PC-3 (cell line): ENCODE measurements at regions of chr13 and their contacts with region 1.

Region 1: GRCh38 chr13:32911506-32911905 is 104.7 kb upstream of the KL start:
- DNase-seq: peak; percentile 61
- ATAC-seq: peak; percentile 90
- H3K4me3 ChIP-seq: no peak overlapping the region
- H3K27ac ChIP-seq: peak overlapping the region; percentile 83
- H3K4me1 ChIP-seq: peaks cover 16% of the 10 kb centered on the region
- H3K27me3 ChIP-seq: no peaks in the 10 kb centered on the region
- CTCF ChIP-seq: peak; percentile 75

Region 2: GRCh38 chr13:31930901-31931522 is 980.5 kb before region 1 on chr13:
- CTCF ChIA-PET with region 1: no interaction called
- POLR2A ChIA-PET with region 1: no interaction called
- intact Hi-C with region 1: no loop called
- DNase-seq: peak; percentile 64
- ATAC-seq: no peak
- H3K4me3 ChIP-seq: no peak overlapping the region
- H3K27ac ChIP-seq: peak overlapping the region; percentile 11; the same call in 1 of the 2 replicates
- H3K4me1 ChIP-seq: peaks cover 23% of the 10 kb centered on the region
- H3K27me3 ChIP-seq: no peaks in the 10 kb centered on the region
- CTCF ChIP-seq: no peak

Region 3: DNA sequence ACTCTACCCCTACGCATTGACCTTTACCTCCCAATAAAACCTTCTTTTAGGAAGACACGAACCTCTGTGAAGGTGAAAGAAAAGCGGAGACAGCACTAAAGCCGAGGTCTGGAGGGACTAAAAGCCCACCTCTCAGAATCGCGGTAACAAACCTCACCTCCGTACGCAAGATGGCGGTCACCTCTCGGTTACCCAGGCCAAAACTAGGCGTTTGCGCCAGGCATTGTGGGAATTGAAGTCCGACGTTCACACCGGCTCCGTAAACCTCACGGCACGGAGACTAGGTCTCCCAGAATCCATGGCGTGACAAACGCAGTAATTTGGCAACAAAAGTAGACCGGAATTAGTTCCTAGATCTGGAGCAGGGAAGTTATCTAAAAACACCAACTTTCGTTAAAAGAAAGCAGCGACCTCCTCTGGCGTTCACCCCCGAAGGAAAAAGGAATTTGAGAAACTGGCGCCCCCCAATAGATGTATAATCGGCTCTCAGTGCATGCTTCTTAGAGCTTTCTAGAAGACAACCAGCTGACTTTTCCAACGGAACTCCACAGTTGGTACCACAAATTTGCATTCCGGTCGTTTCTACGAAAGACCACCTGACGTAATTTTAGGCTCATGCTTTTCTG is 372.8 kb before region 1 on chr13 and contains the start of gene N4BP2L2:
- CTCF ChIA-PET with region 1: no interaction called
- POLR2A ChIA-PET with region 1: no interaction called
- intact Hi-C with region 1: no loop called
- DNase-seq: peak; percentile 95
- ATAC-seq: peak; percentile 99
- H3K4me3 ChIP-seq: peak within 1 kb of the TSS; percentile 85
- H3K27ac ChIP-seq: peak within 1 kb of the TSS; percentile 65
- H3K4me1 ChIP-seq: peaks cover 20% of the 10 kb centered on the region; the same call in 1 of the 2 replicates
- H3K27me3 ChIP-seq: no peaks in the 10 kb centered on the region
- CTCF ChIP-seq: peak; percentile 45; the same call in 1 of the 2 replicates
- total RNA-seq, gene N4BP2L2: 31.7 and 51.4 TPM in 2 replicates

Region 4: GRCh38 chr13:32586080-32586900 is 325.2 kb before region 1 on chr13 and contains the start of gene PDS5B:
- CTCF ChIA-PET with region 1: no interaction called
- POLR2A ChIA-PET with region 1: no interaction called
- intact Hi-C with region 1: loop called (anchors 10 kb)
- DNase-seq: peak; percentile 92
- ATAC-seq: peak; percentile 84
- H3K4me3 ChIP-seq: peak within 1 kb of the TSS; percentile 96
- H3K27ac ChIP-seq: peak within 1 kb of the TSS; percentile 63
- H3K4me1 ChIP-seq: peaks cover 23% of the 10 kb centered on the region
- H3K27me3 ChIP-seq: no peaks in the 10 kb centered on the region
- CTCF ChIP-seq: peak; percentile 74
- total RNA-seq, gene PDS5B: 19.5 and 20.3 TPM in 2 replicates

Region 5: GRCh38 chr13:32650705-32651311 is 260.7 kb before region 1 on chr13:
- CTCF ChIA-PET with region 1: no interaction called
- POLR2A ChIA-PET with region 1: no interaction called
- intact Hi-C with region 1: loop called (anchors 5 kb)
- DNase-seq: peak; percentile 75
- ATAC-seq: peak; percentile 86
- H3K4me3 ChIP-seq: no peak overlapping the region
- H3K27ac ChIP-seq: no peak overlapping the region
- H3K4me1 ChIP-seq: no peaks in the 10 kb centered on the region
- H3K27me3 ChIP-seq: no peaks in the 10 kb centered on the region
- CTCF ChIP-seq: peak; percentile 87

Region 6: GRCh38 chr13:32838945-32839344 is 72.6 kb before region 1 on chr13:
- CTCF ChIA-PET with region 1: no interaction called
- POLR2A ChIA-PET with region 1: no interaction called
- intact Hi-C with region 1: loop called (anchors 10 kb)
- DNase-seq: peak; percentile 56
- ATAC-seq: peak; percentile 71
- H3K4me3 ChIP-seq: no peak overlapping the region
- H3K27ac ChIP-seq: peak overlapping the region; percentile 45
- H3K4me1 ChIP-seq: peaks cover 20% of the 10 kb centered on the region
- H3K27me3 ChIP-seq: no peaks in the 10 kb centered on the region
- CTCF ChIP-seq: no peak